Lower lobe of right lung (tissue), 2 donors: ENCODE measurements at regions of chr6 and their contacts with region 1.

Region 1: DNA sequence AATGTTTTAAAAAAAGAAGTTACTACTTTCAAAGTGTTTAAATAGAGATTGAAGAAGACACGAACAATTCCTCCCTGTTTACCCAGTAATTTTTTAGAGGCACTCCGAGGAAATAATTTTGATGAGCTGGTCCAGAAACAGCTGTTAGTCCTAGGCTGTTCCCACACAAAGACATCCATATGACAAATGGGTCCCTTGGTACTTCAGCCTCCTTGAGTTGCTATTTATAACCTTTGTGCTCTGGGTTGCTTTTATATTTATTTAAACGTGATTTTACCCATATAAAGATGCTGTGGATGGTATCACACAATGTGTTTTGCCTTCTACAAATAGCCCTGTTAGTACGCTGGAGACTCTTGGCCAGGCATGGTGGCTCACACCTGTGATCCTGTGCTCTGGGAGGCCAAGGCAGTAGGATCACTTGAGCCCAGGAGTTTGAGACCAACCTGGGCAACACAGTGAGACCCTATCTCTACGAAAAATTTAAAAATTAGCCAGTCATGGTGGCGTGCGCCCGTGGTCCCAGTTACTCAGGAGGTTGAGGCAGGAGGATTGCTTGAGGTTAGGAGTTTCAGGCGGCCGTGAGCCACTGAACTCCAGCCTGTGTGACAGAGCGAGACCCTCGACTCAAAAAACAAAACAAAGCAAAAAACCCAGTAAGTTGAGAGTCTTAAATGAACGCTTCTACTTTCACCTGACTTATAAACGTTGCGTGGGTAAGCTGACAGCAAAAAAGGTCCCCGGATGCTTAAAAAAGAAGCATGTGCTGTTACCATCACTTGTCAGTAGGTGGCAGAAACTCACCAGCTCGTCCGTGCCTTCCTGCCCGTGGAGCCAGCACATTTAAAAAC is 56.9 kb upstream of the ARMH2 start:
- DNase-seq: peak; percentile 68
- ATAC-seq: peak; percentile 78 to 84
- H3K4me3 ChIP-seq: no peak overlapping the region
- H3K27ac ChIP-seq: peak overlapping the region; percentile 44
- H3K4me1 ChIP-seq: peaks cover 36% of the 10 kb centered on the region
- H3K27me3 ChIP-seq: no peaks in the 10 kb centered on the region
- CTCF ChIP-seq: peak; percentile 88

Region 2: GRCh38 chr6:24761193-24761835 is 94.3 kb before region 1 on chr6:
- intact Hi-C with region 1: no loop called
- DNase-seq: no peak
- ATAC-seq: no peak
- H3K4me3 ChIP-seq: no peak overlapping the region
- H3K27ac ChIP-seq: no peak overlapping the region
- H3K4me1 ChIP-seq: peaks cover 5% of the 10 kb centered on the region
- H3K27me3 ChIP-seq: no peaks in the 10 kb centered on the region
- CTCF ChIP-seq: no peak

Region 3: DNA sequence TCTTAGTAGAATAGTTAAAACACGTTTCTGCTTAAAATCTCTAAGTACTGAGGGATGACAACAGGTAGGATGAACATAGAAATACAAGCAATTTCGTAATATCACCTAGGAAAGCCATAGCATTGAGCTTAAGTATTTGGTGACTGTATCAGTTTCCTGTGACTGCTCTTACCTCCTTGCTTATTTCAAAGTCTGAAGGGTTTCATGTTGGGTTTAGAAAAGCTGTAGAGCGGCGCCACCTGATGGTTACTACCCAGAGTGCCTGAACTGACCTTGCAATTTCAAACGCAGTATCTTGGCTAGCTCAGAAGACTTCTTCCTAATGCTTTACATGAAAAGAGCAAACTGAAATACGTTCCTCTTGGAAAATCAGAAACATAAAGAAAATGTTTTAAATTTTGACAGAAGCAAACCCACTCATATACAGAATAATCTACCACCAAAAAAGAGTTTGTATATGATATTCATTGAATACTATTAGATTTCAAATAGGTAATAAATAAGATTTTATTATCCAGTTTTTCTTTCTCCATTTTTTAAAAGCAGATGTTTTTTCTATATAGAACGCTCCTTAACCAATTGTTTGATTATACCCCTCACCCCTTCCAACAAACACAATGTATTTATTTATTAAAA is 162.4 kb after region 1 on chr6:
- intact Hi-C with region 1: loop called (anchors 10 kb)
- DNase-seq: peak; percentile 87
- ATAC-seq: peak; percentile 86 to 91
- H3K4me3 ChIP-seq: no peak overlapping the region
- H3K27ac ChIP-seq: peak overlapping the region; percentile 66
- H3K4me1 ChIP-seq: peaks cover 40% of the 10 kb centered on the region
- H3K27me3 ChIP-seq: no peaks in the 10 kb centered on the region
- CTCF ChIP-seq: peak; percentile 67

Region 4: GRCh38 chr6:25066593-25066992 is 211.0 kb after region 1 on chr6:
- intact Hi-C with region 1: loop called (anchors 5 kb)
- DNase-seq: no peak
- ATAC-seq: no peak
- H3K4me3 ChIP-seq: no peak overlapping the region
- H3K27ac ChIP-seq: no peak overlapping the region
- H3K4me1 ChIP-seq: no peaks in the 10 kb centered on the region
- H3K27me3 ChIP-seq: no peaks in the 10 kb centered on the region
- CTCF ChIP-seq: no peak

Region 5: GRCh38 chr6:25882051-25882496 is 1026.5 kb after region 1 on chr6:
- intact Hi-C with region 1: no loop called
- DNase-seq: peak; percentile 61
- ATAC-seq: peak; percentile 67 to 76
- H3K4me3 ChIP-seq: peak overlapping the region; percentile 43
- H3K27ac ChIP-seq: no peak overlapping the region
- H3K4me1 ChIP-seq: no peaks in the 10 kb centered on the region
- H3K27me3 ChIP-seq: no peaks in the 10 kb centered on the region
- CTCF ChIP-seq: no peak